Activated T-helper 1 cell treated with anti-CD3 and anti-CD28 coated beads, Interleukin-12 subunit alpha, Interleukin-12 subunit beta, Interleukin-2, Interleukin-4 antibody, amounts not matched to agents 30 ng/mL and 10 ng/mL and 1 ng/mL, durations not matched to agents 14 hours and 24 hours and 36 hours (primary cell): ENCODE measurements at regions of chr22 and their contacts with region 1.

Region 1: GRCh38 chr22:25488244-25489020 is 76.0 kb upstream of the GRK3 start:
- DNase-seq: no peak
- H3K4me3 Mint-ChIP-seq: peak overlapping the region; percentile 28
- H3K27ac Mint-ChIP-seq: peak overlapping the region; percentile 90
- H3K4me1 Mint-ChIP-seq: peaks cover 62% of the 10 kb centered on the region
- H3K27me3 Mint-ChIP-seq: peaks cover 4% of the 10 kb centered on the region

Region 2: GRCh38 chr22:25623310-25623734 is 134.9 kb after region 1 on chr22:
- intact Hi-C with region 1: loop called (anchors 2 kb)
- DNase-seq: no peak
- H3K4me3 Mint-ChIP-seq: peak overlapping the region; percentile 23
- H3K27ac Mint-ChIP-seq: peak overlapping the region; percentile 54
- H3K4me1 Mint-ChIP-seq: peaks cover 63% of the 10 kb centered on the region
- H3K27me3 Mint-ChIP-seq: no peaks in the 10 kb centered on the region